ENCODE measurements at regions of chrX and their contacts with region 1.

Region 1: DNA sequence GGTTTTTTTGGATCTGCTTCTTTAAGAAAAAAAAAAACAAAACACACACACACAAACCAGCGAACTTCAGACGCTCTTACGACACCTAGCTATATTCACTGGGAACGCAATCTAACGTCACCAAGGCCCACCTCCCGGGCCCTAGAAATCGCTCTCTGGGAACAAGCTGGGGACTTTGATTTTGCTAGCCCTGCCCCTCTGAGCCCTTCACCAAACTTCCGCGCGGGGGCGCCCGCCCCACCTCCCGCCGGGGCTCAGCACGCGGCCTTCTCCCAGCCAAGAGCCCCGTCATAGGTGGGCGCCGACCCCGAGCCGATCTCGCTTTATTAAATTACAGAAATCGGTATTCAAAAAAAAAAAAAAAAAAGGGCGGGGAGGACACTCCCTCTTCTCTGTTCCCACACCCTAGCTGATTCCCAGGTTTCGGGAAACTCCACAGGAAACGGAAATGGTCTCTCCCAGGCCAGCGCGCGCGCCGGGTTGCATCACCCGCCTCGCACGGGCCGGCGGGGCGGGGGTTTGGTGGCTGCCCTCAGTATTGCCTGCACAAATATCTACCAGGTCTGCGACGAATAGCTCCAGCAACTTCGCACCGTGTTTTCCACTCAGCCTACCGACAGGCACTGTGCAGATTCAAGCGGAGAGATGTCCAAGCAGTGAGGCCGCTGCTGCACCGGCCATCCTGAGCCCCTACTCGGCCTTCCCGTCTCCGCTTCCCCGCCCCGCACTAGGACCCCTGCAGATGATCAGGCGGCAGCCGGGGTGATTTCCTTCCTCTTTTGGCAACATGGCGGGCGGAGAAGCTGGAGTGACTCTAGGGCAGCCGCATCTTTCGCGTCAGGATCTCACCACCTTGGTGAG is at the start of gene EIF2S3:
- DNase-seq: peak; percentile 69 to 86
- ATAC-seq: peak; percentile 97
- H3K4me3 ChIP-seq: peak within 1 kb of the TSS in 3 of 4 donors; percentile 66 to 83 (median 71)
- H3K27ac ChIP-seq: no peak within 1 kb of the TSS
- H3K4me1 ChIP-seq: peaks cover 0 to 3% of the 10 kb centered on the region in 2 donors
- H3K27me3 ChIP-seq: no peaks in the 10 kb centered on the region
- CTCF ChIP-seq: peak; percentile 33 to 80 (median 71)
- POLR2A ChIP-seq: peak; percentile 29 to 48
- total RNA-seq, gene EIF2S3: 50.8 to 89.1 (median 70.2) TPM

Region 2: DNA sequence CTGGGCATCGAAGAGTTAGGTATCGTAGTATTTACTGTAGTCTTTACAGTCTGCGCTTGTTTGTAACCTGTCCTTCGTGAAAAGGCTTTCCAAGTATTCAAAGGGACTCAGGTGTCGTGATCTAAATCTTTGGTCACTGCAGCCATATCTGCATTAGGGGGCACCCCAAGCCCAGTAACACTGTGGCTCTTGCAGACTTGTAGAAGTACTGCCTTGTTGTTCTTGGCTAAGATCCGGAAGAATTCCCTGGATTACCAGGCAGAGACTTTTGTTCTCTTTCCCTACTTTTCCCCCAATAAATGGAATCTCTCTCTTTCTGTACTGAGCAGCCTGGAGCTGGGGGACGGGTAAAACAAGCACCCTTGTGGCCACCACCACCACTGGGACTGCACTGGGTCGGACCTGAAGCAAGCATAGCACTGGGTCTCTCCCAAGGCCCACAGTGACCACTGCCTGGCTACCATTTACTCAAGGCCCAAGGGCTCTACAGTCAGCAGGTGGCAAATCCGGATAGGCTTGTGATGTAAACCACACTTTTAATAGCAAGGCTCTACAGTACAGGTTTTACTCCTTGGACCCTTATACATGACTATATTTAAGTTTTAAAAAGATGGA is 134.6 kb before region 1 on chrX:
- in situ Hi-C with region 1: loop called in 1 of 4 experiments (anchors 10 kb)
- intact Hi-C with region 1: no loop called
- DNase-seq: no peak
- ATAC-seq: no peak
- H3K4me3 ChIP-seq: no peak overlapping the region
- H3K27ac ChIP-seq: no peak overlapping the region
- H3K4me1 ChIP-seq: no peaks in the 10 kb centered on the region
- H3K27me3 ChIP-seq: no peaks in the 10 kb centered on the region
- CTCF ChIP-seq: no peak
- POLR2A ChIP-seq: no peak

Region 3: DNA sequence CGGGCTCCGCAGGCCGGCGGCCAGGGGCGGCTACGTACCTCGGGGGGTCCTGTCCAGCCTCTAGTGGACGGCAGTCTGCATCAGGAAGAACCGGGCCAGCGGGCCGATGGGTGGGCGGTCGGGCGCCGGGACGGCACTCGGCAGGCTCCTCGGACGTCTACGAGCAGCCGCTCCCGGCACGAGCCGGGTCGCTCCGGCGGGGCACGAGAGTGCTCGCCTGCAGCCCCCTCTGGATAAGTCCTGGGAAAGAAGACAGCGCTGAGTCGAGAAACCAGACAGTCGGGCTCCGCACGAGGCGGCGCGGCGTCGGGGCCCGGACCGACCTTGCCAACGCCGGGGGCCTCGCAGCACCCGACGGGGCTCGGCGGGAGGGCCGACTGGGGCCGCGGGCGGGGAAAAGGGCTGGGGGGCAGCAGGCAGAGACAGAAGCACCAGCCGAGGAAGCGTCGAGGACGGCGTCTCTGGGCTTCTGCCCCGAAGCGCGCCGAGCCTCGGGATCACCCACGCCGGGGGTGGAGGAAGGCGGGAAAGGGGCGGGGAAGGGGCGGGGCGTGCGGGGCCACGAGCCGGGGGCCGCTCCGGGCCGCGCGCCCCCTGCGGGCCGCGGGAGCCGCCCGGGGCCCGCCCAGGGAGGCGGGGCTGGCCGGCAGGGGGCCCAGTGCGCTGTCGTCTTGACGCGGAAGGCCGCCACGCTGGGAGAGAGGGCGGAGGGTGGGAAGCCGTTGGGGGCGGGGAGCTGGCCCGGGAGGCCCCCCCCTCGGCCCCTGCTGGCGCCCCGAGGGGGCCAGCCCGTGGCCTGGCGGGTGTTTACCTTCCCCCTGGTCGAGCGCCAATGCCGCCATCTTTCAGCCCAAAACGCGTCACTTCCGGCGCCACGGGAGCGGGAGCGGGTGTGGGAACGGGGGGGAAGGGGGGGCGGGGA is 29.3 kb before region 1 on chrX:
- in situ Hi-C with region 1: no loop called
- intact Hi-C with region 1: loop called (anchors 1 kb)
- DNase-seq: peak; percentile 67 to 82
- ATAC-seq: peak; percentile 81 to 85
- H3K4me3 ChIP-seq: peak overlapping the region; percentile 69 to 92 (median 79)
- H3K27ac ChIP-seq: peak overlapping the region; percentile 90 to 98 (median 94)
- H3K4me1 ChIP-seq: peaks cover 3 to 4% of the 10 kb centered on the region in 2 donors
- H3K27me3 ChIP-seq: peaks cover 0 to 3% (median 0%) of the 10 kb centered on the region in 3 donors
- CTCF ChIP-seq: peak in 1 of 5 experiments; percentile 32
- POLR2A ChIP-seq: peak; percentile 84 to 85

Region 4: DNA sequence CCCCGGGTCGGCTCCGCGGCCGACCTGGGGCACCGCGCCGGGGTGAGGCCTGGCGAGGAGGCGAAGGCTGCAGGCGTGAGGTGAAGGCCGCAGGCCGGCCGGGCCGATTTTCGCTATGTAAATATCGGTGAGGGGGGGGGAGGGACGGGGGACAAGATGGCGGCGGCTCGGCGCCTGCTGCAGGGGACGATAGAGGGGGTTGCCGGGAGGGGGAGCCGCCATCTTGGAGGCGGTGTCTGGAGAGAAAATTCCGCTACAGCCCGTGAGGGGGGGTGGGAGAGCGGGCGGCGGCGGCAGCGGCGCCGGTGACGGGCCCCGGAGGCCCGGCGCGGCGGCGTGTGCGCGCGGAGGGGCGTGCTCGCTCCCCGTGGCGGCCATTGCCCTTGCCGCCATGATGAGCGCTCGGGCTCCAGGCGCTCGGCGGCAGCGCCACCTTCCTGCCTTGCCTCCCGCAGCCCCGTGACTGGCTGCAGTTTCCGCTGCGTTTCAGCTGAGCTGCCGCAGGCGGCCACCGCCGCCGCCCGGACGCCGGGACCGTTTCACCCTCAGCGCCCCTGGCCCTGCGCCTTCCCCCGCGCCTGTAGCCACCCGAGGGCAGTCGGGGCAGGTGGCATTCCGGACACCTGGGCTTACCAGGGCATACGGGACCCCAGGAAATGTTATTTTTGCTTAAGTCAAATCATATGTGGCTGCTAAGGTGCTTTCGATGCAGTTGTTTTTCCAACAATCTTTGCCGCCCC is 95.8 kb after region 1 on chrX:
- in situ Hi-C with region 1: loop called in 2 of 4 experiments (anchors 10 kb)
- intact Hi-C with region 1: loop called (anchors 1 kb)
- DNase-seq: peak; percentile 80 to 83
- ATAC-seq: peak; percentile 79 to 85
- H3K4me3 ChIP-seq: peak overlapping the region; percentile 62 to 85 (median 76)
- H3K27ac ChIP-seq: peak overlapping the region; percentile 93 to 99 (median 95)
- H3K4me1 ChIP-seq: peaks cover 57 to 64% of the 10 kb centered on the region in 2 donors
- H3K27me3 ChIP-seq: no peaks in the 10 kb centered on the region
- CTCF ChIP-seq: peak in 4 of 5 experiments; percentile 59 to 68 (median 61)
- POLR2A ChIP-seq: peak; percentile 51 to 63

Region 5: DNA sequence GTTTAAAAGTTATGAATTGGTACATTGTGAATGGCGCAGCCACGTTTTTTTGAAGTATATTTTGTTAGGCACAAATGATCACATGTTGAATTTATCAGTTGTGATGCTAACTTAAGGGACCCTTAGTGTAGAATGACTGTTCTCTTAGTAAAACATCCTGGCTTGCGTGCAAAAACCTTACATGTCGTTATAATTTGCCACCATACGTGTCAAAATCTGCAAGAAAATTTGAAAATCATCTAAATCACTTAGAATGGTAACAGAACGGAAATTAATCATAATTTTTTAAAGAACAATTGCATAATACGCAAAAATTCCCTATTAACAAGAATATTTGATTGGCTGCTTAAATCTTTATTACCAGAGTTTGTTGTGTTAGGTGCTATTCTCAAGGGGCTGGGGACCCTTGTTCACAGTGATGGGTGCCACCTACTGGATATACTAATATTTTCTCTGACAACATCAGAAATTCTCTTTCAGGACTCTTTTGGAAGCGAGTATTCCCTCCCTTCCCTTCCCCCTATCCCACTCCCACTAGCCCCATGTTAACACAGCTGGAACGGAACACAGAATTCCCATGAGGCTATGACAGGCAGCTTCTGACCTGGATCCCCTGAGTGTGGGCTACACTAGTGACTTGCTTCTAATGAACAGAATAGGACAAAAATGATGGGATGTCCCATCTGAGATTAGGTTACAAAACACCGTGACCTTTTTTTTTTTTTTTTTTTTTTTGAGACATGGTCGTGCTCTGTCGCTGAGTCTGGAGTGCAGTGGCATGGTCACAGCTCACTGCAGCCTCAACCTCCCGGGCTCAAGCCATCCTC is 187.6 kb after region 1 on chrX:
- in situ Hi-C with region 1: no loop called
- intact Hi-C with region 1: loop called (anchors 10 kb)
- DNase-seq: peak in 1 of 2 donors; percentile 11
- ATAC-seq: no peak
- H3K4me3 ChIP-seq: no peak overlapping the region
- H3K27ac ChIP-seq: peak overlapping the region; percentile 43 to 66 (median 54)
- H3K4me1 ChIP-seq: peaks cover 0 to 4% of the 10 kb centered on the region in 2 donors
- H3K27me3 ChIP-seq: no peaks in the 10 kb centered on the region
- CTCF ChIP-seq: peak in 4 of 5 experiments; percentile 13 to 51 (median 27)
- POLR2A ChIP-seq: no peak

Measured in gastrocnemius medialis (tissue), 4 donors.